ENCODE measurements at regions of chr10 and their contacts with region 1.

Region 1: GRCh38 chr10:124916585-124917427 is 25.1 kb upstream of the ZRANB1 start:
- DNase-seq: peak; percentile 96
- H3K4me3 Mint-ChIP-seq: peak overlapping the region; percentile 91
- H3K27ac Mint-ChIP-seq: peak overlapping the region; percentile 80
- H3K4me1 Mint-ChIP-seq: peaks cover 21% of the 10 kb centered on the region
- H3K27me3 Mint-ChIP-seq: no peaks in the 10 kb centered on the region
- CTCF ChIP-seq: no peak

Region 2: GRCh38 chr10:124943301-124944092 is 26.7 kb after region 1 on chr10:
- CTCF ChIA-PET with region 1: no interaction called
- POLR2A ChIA-PET with region 1: interaction called, 21 read pairs
- intact Hi-C with region 1: no loop called
- DNase-seq: peak; percentile 33
- H3K4me3 Mint-ChIP-seq: peak overlapping the region; percentile 43
- H3K27ac Mint-ChIP-seq: peak overlapping the region; percentile 93
- H3K4me1 Mint-ChIP-seq: peaks cover 37% of the 10 kb centered on the region
- H3K27me3 Mint-ChIP-seq: no peaks in the 10 kb centered on the region
- CTCF ChIP-seq: no peak

Region 3: GRCh38 chr10:124992462-124993344 is 75.9 kb after region 1 on chr10:
- CTCF ChIA-PET with region 1: interaction called, 4 read pairs
- POLR2A ChIA-PET with region 1: interaction called, 6 read pairs
- intact Hi-C with region 1: loop called (anchors 5 kb)
- DNase-seq: peak; percentile 68
- H3K4me3 Mint-ChIP-seq: no peak overlapping the region
- H3K27ac Mint-ChIP-seq: no peak overlapping the region
- H3K4me1 Mint-ChIP-seq: no peaks in the 10 kb centered on the region
- H3K27me3 Mint-ChIP-seq: no peaks in the 10 kb centered on the region
- CTCF ChIP-seq: peak; percentile 50

Measured in MCF 10A (cell line).